K562 (cell line): ENCODE measurements at regions of chr2 and their contacts with region 1.

Region 1: DNA sequence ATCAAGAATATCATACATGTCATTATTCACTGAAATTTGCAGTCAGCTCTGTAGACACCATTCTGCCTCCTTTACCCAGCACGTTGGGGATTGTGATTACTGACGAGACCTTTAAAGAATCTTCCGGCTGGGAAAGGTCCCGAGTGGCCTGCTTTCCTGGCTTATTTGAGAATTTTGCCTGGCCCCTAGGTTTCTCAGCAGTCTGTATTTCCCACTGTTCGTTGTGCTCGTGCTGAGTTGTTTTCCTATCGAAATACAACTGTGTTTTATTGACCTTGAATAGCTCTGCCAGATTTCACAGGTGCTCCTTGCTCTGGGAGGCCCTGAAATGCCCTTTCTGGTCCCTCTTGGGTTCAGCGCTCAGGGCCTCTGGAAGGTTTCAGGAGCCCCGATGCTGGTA is 94.9 kb downstream of the AGAP1 start:
- DNase-seq: no peak
- ATAC-seq: no peak
- H3K4me3 ChIP-seq: no peak overlapping the region
- H3K27ac ChIP-seq: no peak overlapping the region
- H3K4me1 ChIP-seq: peaks cover 0 to 4% of the 10 kb centered on the region in 2 experiments; a peak in 2 of 5 replicates
- H3K27me3 ChIP-seq: no peaks in the 10 kb centered on the region
- CTCF ChIP-seq: no peak
- EP300 ChIP-seq: no peak
- POLR2A ChIP-seq: no peak
- RAD21 ChIP-seq: no peak

Region 2: GRCh38 chr2:235135990-235136561 is 452.7 kb before region 1 on chr2:
- CTCF ChIA-PET with region 1: interaction called, 4 read pairs
- POLR2A ChIA-PET with region 1: interaction called, 3 read pairs
- in situ Hi-C with region 1: loop called (anchors 10 kb)
- intact Hi-C with region 1: no loop called
- DNase-seq: peak; percentile 57 to 65 (median 60)
- ATAC-seq: peak; percentile 89
- H3K4me3 ChIP-seq: no peak overlapping the region
- H3K27ac ChIP-seq: no peak overlapping the region
- H3K4me1 ChIP-seq: no peaks in the 10 kb centered on the region
- H3K27me3 ChIP-seq: peaks cover 0 to 14% of the 10 kb centered on the region in 2 experiments; a peak in 2 of 5 replicates
- CTCF ChIP-seq: peak; percentile 62 to 67 (median 63)
- EP300 ChIP-seq: no peak
- POLR2A ChIP-seq: no peak
- RAD21 ChIP-seq: peak; percentile 32 to 59; a peak in 2 of 4 replicates

Region 3: GRCh38 chr2:235433860-235434259 is 154.9 kb before region 1 on chr2:
- CTCF ChIA-PET with region 1: interaction called, 18 read pairs
- POLR2A ChIA-PET with region 1: interaction called, 3 read pairs
- in situ Hi-C with region 1: loop called (anchors 10 kb)
- intact Hi-C with region 1: no loop called
- DNase-seq: peak in 2 of 4 experiments; percentile 41 to 52
- ATAC-seq: peak; percentile 96
- H3K4me3 ChIP-seq: no peak overlapping the region
- H3K27ac ChIP-seq: peak overlapping the region; percentile 32; the same call in 1 of the 3 replicates
- H3K4me1 ChIP-seq: peaks cover 0 to 8% of the 10 kb centered on the region in 2 experiments; a peak in 3 of 5 replicates
- H3K27me3 ChIP-seq: no peaks in the 10 kb centered on the region
- CTCF ChIP-seq: peak; percentile 39 to 75 (median 48); a peak in 5 of 6 replicates
- EP300 ChIP-seq: peak; percentile 44; the same call in 1 of the 2 replicates
- POLR2A ChIP-seq: no peak
- RAD21 ChIP-seq: peak; percentile 82 to 88

Region 4: GRCh38 chr2:235480614-235481013 is 108.1 kb before region 1 on chr2:
- CTCF ChIA-PET with region 1: no interaction called
- POLR2A ChIA-PET with region 1: no interaction called
- in situ Hi-C with region 1: no loop called
- intact Hi-C with region 1: no loop called
- DNase-seq: no peak
- ATAC-seq: no peak
- H3K4me3 ChIP-seq: no peak overlapping the region
- H3K27ac ChIP-seq: no peak overlapping the region
- H3K4me1 ChIP-seq: peaks cover 3 to 9% of the 10 kb centered on the region in 2 experiments; a peak in 3 of 5 replicates
- H3K27me3 ChIP-seq: no peaks in the 10 kb centered on the region
- CTCF ChIP-seq: no peak
- EP300 ChIP-seq: no peak
- POLR2A ChIP-seq: no peak
- RAD21 ChIP-seq: no peak